ENCODE measurements at regions of chr3 and their contacts with region 1.

Region 1: DNA sequence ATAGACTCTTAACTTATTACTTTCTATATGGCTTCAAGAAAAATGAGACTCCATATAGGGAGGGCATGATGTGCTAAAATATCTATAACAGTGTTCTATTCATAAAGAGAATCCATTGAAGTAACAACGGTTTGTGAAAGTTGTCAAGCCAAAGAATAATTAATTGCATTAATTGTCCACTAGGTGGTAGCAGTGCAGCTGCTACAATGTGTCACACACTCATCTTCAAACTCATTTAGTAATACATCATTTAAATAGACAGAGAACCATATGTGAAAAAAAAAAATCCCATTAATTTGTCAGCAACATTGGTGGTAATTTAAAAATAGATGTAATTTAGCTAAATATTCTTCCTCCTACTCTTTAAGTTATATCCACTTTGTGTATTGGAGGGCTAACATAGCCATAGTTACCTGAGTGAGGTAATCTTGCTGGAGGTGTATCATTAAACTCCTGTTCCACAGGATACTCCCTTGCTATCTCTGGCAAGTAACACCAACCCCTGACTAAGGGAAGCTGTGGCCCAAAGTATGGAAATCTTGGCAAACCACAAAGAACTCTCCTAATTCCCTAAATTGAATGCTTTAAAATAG is 3.7 kb upstream of the CPA3 start:
- DNase-seq: peak; percentile 56 to 77 (median 74)
- H3K4me3 ChIP-seq: no peak overlapping the region
- H3K27ac ChIP-seq: no peak overlapping the region
- H3K4me1 ChIP-seq: peaks cover 9 to 31% (median 25%) of the 10 kb centered on the region in 4 experiments
- H3K27me3 ChIP-seq: no peaks in the 10 kb centered on the region

Region 2: DNA sequence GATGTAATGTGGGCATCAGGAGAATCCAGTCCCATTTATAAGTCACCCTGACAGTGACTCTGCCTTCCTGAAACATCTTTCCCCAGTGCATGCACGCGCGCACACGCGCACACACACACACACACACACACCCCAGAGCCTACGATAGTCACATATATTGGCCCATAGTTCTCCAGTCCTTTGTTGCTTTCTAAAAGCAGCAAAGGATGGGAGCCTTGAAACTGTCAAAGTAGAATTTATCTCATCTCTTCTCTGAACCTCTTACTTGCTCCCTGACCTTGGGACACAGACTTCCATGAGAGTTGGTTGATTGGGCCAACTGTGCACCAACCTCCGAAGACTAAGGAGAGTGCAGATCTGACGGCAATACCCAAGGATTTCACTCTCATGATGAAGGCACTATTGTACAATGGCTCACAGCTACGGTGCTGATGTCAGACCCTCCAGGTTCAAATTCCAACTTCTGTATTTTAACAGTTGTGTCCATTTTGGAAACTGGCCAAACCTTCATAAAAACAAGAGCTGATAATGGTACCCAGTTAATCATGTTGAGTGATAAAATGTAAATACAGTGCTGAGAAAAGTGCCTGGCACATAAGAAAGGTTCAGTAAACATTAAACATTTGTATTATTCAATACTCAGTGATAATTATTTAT is 12.0 kb after region 1 on chr3:
- CTCF ChIA-PET with region 1: interaction called, 93 read pairs
- POLR2A ChIA-PET with region 1: no interaction called
- DNase-seq: no peak
- H3K4me3 ChIP-seq: no peak overlapping the region
- H3K27ac ChIP-seq: no peak overlapping the region
- H3K4me1 ChIP-seq: peaks cover 0 to 8% (median 2%) of the 10 kb centered on the region in 4 experiments
- H3K27me3 ChIP-seq: no peaks in the 10 kb centered on the region

Region 3: DNA sequence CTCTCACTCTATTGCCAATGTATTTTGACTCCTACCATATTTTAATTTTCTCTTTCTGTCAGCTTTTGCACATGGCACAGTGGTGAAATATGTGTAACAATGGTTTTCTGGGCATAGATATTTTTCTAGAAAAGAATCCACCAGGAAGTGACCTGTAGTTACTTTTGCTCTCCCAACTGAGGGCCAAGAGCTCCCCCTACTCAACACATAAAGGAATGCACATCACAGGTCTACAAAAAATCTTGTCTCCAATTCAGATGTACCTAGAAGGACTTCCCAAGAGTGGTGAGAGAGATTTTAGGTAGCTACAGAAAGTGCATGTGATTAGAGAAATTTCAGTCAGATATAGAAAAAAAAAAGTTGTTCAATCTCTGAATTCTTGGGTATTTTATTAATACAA is 19.3 kb after region 1 on chr3:
- CTCF ChIA-PET with region 1: interaction called, 93 read pairs
- POLR2A ChIA-PET with region 1: no interaction called
- DNase-seq: peak; percentile 54 to 70 (median 64)
- H3K4me3 ChIP-seq: no peak overlapping the region
- H3K27ac ChIP-seq: no peak overlapping the region
- H3K4me1 ChIP-seq: peaks cover 0 to 10% (median 2%) of the 10 kb centered on the region in 4 experiments
- H3K27me3 ChIP-seq: no peaks in the 10 kb centered on the region

Region 4: GRCh38 chr3:148943506-148944205 is 82.3 kb after region 1 on chr3:
- CTCF ChIA-PET with region 1: interaction called, 155 read pairs
- POLR2A ChIA-PET with region 1: no interaction called
- DNase-seq: peak; percentile 55 to 77 (median 75)
- H3K4me3 ChIP-seq: no peak overlapping the region
- H3K27ac ChIP-seq: no peak overlapping the region
- H3K4me1 ChIP-seq: no peaks in the 10 kb centered on the region
- H3K27me3 ChIP-seq: no peaks in the 10 kb centered on the region

Region 5: DNA sequence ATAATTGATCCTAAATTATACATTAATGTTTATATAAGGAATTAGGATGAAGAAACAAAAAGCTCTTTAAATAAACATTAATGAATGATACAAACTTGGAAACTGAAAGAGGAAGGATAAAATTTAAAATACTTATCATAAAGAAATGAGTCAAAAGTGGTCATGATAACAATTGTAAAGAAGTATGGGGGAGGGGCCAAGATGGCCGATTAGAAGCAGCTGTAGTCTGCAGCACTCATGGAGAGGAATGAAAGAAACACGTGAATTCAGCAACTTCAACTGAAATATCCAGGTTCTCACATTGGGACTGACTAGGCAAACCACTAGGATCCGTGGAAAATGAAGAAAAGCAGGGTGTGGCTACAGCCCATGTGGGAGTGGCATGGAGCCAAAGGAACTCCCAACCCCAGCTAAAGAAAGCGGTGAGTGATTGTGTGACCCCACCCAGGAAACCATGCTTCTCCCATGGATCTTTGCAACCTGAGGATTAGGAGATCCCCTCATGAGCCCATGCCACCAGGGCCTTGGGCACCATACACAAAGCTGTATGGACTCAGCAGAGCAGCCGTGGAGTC is 373.4 kb after region 1 on chr3:
- CTCF ChIA-PET with region 1: no interaction called
- POLR2A ChIA-PET with region 1: no interaction called
- DNase-seq: no peak
- H3K4me3 ChIP-seq: no peak overlapping the region
- H3K27ac ChIP-seq: no peak overlapping the region
- H3K4me1 ChIP-seq: no peaks in the 10 kb centered on the region
- H3K27me3 ChIP-seq: no peaks in the 10 kb centered on the region